ENCODE measurements at regions of chr11 and their contacts with region 1.

Region 1: DNA sequence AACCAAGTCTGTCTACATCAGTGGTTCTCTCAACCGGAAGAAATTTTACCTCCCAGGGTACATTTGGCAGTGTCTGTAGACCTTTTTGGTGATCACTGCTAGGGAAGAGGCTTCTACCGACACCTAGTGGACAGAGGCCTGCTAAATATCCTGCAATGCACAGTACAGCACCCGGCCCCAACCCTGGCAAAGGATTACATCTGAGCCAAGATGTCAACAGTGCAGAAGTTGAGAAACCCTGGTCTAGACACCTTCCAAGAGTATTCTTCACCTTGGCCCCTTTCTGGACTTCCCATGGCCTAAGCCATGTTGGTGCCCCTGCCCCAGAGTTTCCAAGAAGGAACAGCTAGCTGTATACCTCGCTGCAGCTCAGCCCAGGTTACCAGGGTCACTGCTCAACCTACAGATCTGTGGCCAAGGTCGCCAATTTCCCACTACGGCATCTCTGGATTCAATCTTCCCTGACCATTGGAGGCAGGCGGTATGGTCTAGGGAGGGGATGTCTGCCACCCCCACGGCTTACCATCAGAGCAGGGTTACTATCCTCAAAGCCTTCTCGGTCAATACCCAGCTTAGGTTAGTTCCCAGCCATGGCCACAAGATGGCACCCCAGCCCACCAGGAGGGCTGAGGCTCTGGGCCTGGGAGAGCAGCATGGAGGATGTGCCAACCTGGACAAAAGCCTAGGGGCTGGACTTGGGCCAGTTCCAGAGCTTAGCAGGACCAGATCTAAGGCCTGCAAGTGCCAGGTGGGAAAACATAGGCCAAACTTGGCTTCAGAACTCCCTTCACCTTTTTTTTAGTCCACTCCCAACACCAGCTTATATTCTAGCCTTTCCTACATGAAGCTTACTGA is 3.7 kb upstream of the KCNC1 start:
- DNase-seq: peak; percentile 89
- H3K4me3 ChIP-seq: no peak overlapping the region; a peak in 1 of 4 replicates
- H3K27ac ChIP-seq: no peak overlapping the region
- H3K4me1 ChIP-seq: peaks cover 0 to 13% of the 10 kb centered on the region in 2 experiments; a peak in 1 of 4 replicates
- H3K27me3 ChIP-seq: no peaks in the 10 kb centered on the region; the same call in 1 of the 2 replicates
- CTCF ChIP-seq: peak; percentile 77
- EP300 ChIP-seq: peak in 1 of 2 experiments; percentile 10; a peak in 1 of 4 replicates
- RAD21 ChIP-seq: peak; percentile 98

Region 2: GRCh38 chr11:17588166-17588565 is 142.7 kb before region 1 on chr11:
- CTCF ChIA-PET with region 1: interaction called, 271 read pairs
- POLR2A ChIA-PET with region 1: no interaction called
- DNase-seq: no peak
- H3K4me3 ChIP-seq: no peak overlapping the region
- H3K27ac ChIP-seq: no peak overlapping the region
- H3K4me1 ChIP-seq: no peaks in the 10 kb centered on the region
- H3K27me3 ChIP-seq: no peaks in the 10 kb centered on the region
- CTCF ChIP-seq: no peak
- EP300 ChIP-seq: no peak
- RAD21 ChIP-seq: no peak

Region 3: DNA sequence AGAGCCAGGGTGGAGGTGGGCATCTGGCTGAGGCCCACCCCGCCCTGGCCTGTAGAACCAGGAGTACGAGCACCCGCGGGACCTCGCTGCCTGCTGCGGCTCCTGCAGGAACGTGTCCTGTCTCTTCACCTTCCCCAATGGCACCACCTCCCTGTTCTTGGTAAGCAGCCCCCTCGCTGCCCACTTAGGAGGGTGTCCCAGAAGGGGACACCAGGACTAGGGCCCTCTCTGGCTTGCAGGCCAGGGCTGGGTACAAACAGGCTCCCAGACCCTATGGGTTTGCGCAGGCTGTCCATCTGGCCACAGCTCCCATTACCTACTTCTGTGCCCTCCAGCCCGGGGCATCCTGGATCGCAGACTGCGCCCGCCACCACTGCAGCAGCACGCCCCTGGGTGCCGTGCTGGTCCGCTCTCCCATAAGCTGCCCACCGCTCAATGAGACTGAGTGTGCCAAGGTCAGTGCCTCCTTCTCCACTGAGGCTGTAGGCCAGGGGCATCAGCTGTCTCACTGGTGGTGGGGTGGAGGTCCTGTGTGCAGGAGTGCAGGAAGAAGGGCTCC is 89.0 kb before region 1 on chr11:
- CTCF ChIA-PET with region 1: no interaction called
- POLR2A ChIA-PET with region 1: no interaction called
- DNase-seq: peak; percentile 20
- H3K4me3 ChIP-seq: no peak overlapping the region
- H3K27ac ChIP-seq: no peak overlapping the region
- H3K4me1 ChIP-seq: no peaks in the 10 kb centered on the region; a peak in 1 of 4 replicates
- H3K27me3 ChIP-seq: no peaks in the 10 kb centered on the region
- CTCF ChIP-seq: no peak
- EP300 ChIP-seq: no peak
- RAD21 ChIP-seq: no peak

Region 4: GRCh38 chr11:17703951-17704350 is 26.9 kb before region 1 on chr11:
- CTCF ChIA-PET with region 1: interaction called, 14 read pairs
- POLR2A ChIA-PET with region 1: no interaction called
- DNase-seq: no peak
- H3K4me3 ChIP-seq: no peak overlapping the region
- H3K27ac ChIP-seq: no peak overlapping the region
- H3K4me1 ChIP-seq: no peaks in the 10 kb centered on the region
- H3K27me3 ChIP-seq: no peaks in the 10 kb centered on the region
- CTCF ChIP-seq: no peak
- EP300 ChIP-seq: no peak
- RAD21 ChIP-seq: no peak

Region 5: DNA sequence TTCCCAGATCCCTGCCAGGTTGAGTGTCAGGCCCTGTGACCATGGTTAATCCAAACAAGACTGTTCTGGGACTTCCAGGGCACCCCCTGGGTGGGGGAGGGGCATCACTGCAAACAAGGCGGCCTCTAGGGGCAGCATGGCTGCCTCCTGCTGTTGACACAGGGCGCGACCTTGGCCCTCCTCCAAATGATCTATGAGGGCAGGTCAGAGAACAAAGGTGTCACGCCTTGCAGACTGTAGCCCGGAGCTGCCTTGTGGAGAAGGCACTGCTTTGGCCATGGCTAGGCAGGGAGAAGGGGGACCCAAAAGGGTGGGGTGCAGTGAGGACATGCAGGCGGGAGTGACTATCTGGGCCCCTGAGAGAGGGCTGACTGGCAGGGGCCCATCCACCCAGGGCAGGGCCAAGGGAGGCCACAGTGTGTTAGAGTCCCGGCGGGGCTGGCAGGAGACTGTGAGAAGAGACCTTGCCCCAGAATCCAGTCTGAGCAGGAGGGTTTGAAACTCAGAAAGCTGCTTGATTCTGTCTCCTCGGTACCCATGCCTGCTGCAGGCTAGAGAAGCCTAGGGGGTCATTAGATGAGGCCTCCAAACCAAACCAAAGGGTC is 39.3 kb after region 1 on chr11:
- CTCF ChIA-PET with region 1: interaction called, 12 read pairs
- POLR2A ChIA-PET with region 1: no interaction called
- DNase-seq: peak; percentile 52
- H3K4me3 ChIP-seq: no peak overlapping the region
- H3K27ac ChIP-seq: no peak overlapping the region
- H3K4me1 ChIP-seq: peaks cover 0 to 14% of the 10 kb centered on the region in 2 experiments; a peak in 2 of 4 replicates
- H3K27me3 ChIP-seq: no peaks in the 10 kb centered on the region
- CTCF ChIP-seq: peak; percentile 28; the same call in 1 of the 2 replicates
- EP300 ChIP-seq: no peak
- RAD21 ChIP-seq: no peak

Region 6: GRCh38 chr11:17781221-17781620 is 50.4 kb after region 1 on chr11:
- CTCF ChIA-PET with region 1: no interaction called
- POLR2A ChIA-PET with region 1: no interaction called
- DNase-seq: no peak
- H3K4me3 ChIP-seq: no peak overlapping the region
- H3K27ac ChIP-seq: no peak overlapping the region
- H3K4me1 ChIP-seq: no peaks in the 10 kb centered on the region
- H3K27me3 ChIP-seq: no peaks in the 10 kb centered on the region
- CTCF ChIP-seq: no peak
- EP300 ChIP-seq: no peak
- RAD21 ChIP-seq: no peak

Region 7: DNA sequence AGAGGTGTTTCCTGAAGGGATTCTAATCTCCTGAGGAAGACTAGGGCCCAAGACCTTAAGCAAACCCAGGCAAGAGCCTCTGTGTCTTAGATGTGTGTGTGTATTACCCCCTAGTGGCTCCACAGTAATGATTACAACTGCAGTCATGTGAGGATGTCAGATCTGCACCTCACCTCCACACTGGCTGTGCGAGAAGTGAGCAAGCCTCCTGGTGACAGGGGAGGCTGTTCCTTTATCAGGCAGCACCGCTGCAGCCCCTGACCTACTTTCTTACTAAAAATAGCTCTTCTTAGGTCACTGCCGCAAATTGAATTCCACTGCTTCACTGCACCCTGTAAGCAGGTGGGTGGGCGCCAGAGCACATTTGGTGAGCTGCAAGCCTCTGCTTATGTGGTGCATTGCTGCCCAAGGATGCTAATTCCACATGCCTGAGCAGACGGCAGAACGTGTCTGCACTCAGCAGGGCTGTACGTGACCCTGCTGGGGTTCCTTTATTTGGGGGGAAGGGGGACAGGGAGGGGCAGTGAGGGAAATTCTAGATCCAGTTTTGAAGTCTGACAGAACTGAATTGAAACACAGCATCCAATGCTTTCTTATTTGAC is 116.1 kb after region 1 on chr11:
- CTCF ChIA-PET with region 1: interaction called, 50 read pairs
- POLR2A ChIA-PET with region 1: no interaction called
- DNase-seq: no peak
- H3K4me3 ChIP-seq: no peak overlapping the region
- H3K27ac ChIP-seq: no peak overlapping the region
- H3K4me1 ChIP-seq: peaks cover 7 to 21% of the 10 kb centered on the region in 2 experiments; a peak in 3 of 4 replicates
- H3K27me3 ChIP-seq: no peaks in the 10 kb centered on the region
- CTCF ChIP-seq: peak; percentile 37
- EP300 ChIP-seq: no peak
- RAD21 ChIP-seq: peak; percentile 71

Region 8: GRCh38 chr11:17906436-17906835 is 175.6 kb after region 1 on chr11:
- CTCF ChIA-PET with region 1: interaction called, 174 read pairs
- POLR2A ChIA-PET with region 1: interaction called, 3 read pairs
- DNase-seq: peak; percentile 62
- H3K4me3 ChIP-seq: no peak overlapping the region
- H3K27ac ChIP-seq: no peak overlapping the region
- H3K4me1 ChIP-seq: peaks cover 0 to 9% of the 10 kb centered on the region in 2 experiments; a peak in 2 of 4 replicates
- H3K27me3 ChIP-seq: no peaks in the 10 kb centered on the region
- CTCF ChIP-seq: peak; percentile 35
- EP300 ChIP-seq: no peak
- RAD21 ChIP-seq: peak; percentile 71

Region 9: GRCh38 chr11:17960091-17960490 is 229.3 kb after region 1 on chr11:
- CTCF ChIA-PET with region 1: interaction called, 730 read pairs
- POLR2A ChIA-PET with region 1: no interaction called
- DNase-seq: no peak
- H3K4me3 ChIP-seq: no peak overlapping the region
- H3K27ac ChIP-seq: no peak overlapping the region
- H3K4me1 ChIP-seq: no peaks in the 10 kb centered on the region; a peak in 1 of 4 replicates
- H3K27me3 ChIP-seq: no peaks in the 10 kb centered on the region
- CTCF ChIP-seq: no peak
- EP300 ChIP-seq: no peak
- RAD21 ChIP-seq: no peak

Measured in SK-N-SH (cell line).